ENCODE measurements at regions of chr14 and their contacts with region 1.

Region 1: GRCh38 chr14:59343585-59343984 is 121.6 kb downstream of the GPR135 start:
- DNase-seq: peak in 2 of 3 donors; percentile 64 to 66
- ATAC-seq: peak; percentile 9 to 22
- H3K4me3 ChIP-seq: no peak overlapping the region
- H3K27ac ChIP-seq: peak overlapping the region; percentile 88
- H3K4me1 ChIP-seq: peaks cover 5% of the 10 kb centered on the region
- H3K27me3 ChIP-seq: no peaks in the 10 kb centered on the region

Region 2: GRCh38 chr14:59438195-59438647 is 94.6 kb after region 1 on chr14:
- intact Hi-C with region 1: loop called in 2 of 4 experiments (anchors 10 kb)
- DNase-seq: no peak
- ATAC-seq: no peak
- H3K4me3 ChIP-seq: no peak overlapping the region
- H3K27ac ChIP-seq: no peak overlapping the region
- H3K4me1 ChIP-seq: peaks cover 5% of the 10 kb centered on the region
- H3K27me3 ChIP-seq: no peaks in the 10 kb centered on the region

Region 3: DNA sequence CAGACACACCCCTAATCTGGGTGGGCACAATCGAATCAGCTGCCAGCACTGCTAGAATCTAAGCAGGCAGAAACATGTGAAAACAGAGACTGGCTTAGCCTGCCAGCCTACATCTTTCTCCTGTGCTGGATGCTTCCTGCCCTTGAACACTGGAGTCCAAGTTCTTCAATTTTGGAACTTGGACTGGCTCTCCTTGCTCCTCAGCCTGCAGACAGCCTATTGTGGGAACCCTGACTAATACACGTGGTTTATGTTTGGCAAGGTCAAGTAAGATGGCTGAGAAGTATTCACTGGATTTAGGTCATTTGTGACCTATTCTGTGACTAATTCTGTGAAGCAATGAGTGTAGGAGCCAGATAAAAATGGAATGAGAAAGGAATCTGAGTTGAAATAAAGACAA is 110.5 kb after region 1 on chr14:
- intact Hi-C with region 1: loop called in 1 of 4 experiments (anchors 10 kb)
- DNase-seq: peak in 1 of 3 donors; percentile 51
- ATAC-seq: peak; percentile 92 to 96
- H3K4me3 ChIP-seq: no peak overlapping the region
- H3K27ac ChIP-seq: no peak overlapping the region
- H3K4me1 ChIP-seq: no peaks in the 10 kb centered on the region
- H3K27me3 ChIP-seq: no peaks in the 10 kb centered on the region